GM12878 (cell line): ENCODE measurements at regions of chr4 and their contacts with region 1.

Region 1: DNA sequence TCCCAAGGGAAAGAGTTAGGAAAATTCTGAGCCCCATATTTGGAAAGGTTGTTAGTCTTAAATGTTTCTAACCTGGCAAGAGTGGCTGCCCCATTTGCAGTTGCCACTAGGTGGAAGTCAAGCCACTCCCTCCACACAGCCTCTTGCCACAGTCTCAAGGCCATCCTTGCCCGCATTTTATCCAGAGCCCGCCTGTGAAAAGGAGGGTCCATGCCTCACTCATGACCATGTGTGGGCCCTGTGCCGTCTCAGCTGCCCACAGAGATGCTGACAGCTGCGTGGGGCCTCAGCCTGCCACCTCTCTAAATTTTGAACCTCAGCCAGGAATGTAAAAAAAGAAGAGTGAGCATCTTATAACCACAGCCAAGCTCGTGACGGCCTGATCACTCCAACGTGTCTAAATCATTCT is 201.5 kb upstream of the FAM241A start:
- DNase-seq: no peak
- ATAC-seq: peak; percentile 99
- H3K4me3 ChIP-seq: no peak overlapping the region
- H3K27ac ChIP-seq: no peak overlapping the region
- H3K4me1 ChIP-seq: no peaks in the 10 kb centered on the region
- H3K27me3 ChIP-seq: no peaks in the 10 kb centered on the region; a peak in 1 of 4 replicates
- CTCF ChIP-seq: peak; percentile 60 to 83 (median 70)
- EP300 ChIP-seq: no peak
- POLR2A ChIP-seq: no peak
- RAD21 ChIP-seq: peak; percentile 48

Region 2: GRCh38 chr4:111930659-111931058 is 13.1 kb before region 1 on chr4:
- CTCF ChIA-PET with region 1: interaction called, 11 read pairs
- POLR2A ChIA-PET with region 1: no interaction called
- RAD21 ChIA-PET with region 1: interaction called, 20 read pairs
- SMC1A ChIA-PET with region 1: interaction called, 10 read pairs
- in situ Hi-C with region 1: no loop called
- intact Hi-C with region 1: no loop called
- DNase-seq: peak; percentile 41
- ATAC-seq: peak; percentile 99
- H3K4me3 ChIP-seq: no peak overlapping the region
- H3K27ac ChIP-seq: no peak overlapping the region
- H3K4me1 ChIP-seq: peaks cover 2% of the 10 kb centered on the region; the same call in 1 of the 2 replicates
- H3K27me3 ChIP-seq: no peaks in the 10 kb centered on the region
- CTCF ChIP-seq: no peak
- EP300 ChIP-seq: peak; percentile 20 to 82; a peak in 2 of 4 replicates
- POLR2A ChIP-seq: no peak
- RAD21 ChIP-seq: no peak

Region 3: DNA sequence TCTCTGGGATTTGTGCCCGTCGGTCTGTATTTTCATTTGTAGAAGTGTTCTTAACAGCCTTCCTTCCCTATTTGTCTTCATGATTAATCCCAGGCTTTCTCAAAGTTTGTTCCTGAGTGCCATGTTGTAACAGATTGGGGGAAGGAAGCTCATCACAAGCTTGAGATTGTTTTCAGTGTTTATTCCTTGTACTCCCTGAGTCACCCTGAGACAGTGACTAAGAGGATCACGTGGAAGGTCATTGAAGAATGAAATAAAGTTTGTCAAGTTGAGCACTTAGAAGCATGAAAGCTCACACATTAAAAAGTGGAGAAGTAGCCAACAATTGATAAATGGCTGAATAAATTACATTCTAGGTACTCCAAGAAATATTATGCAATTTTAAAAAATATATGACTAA is 48.0 kb after region 1 on chr4:
- CTCF ChIA-PET with region 1: interaction called, 29 read pairs
- POLR2A ChIA-PET with region 1: no interaction called
- RAD21 ChIA-PET with region 1: interaction called, 16 read pairs
- SMC1A ChIA-PET with region 1: interaction called, 40 read pairs
- in situ Hi-C with region 1: no loop called
- intact Hi-C with region 1: no loop called
- DNase-seq: peak; percentile 13
- ATAC-seq: peak; percentile 69
- H3K4me3 ChIP-seq: no peak overlapping the region
- H3K27ac ChIP-seq: no peak overlapping the region
- H3K4me1 ChIP-seq: peaks cover 12% of the 10 kb centered on the region
- H3K27me3 ChIP-seq: peaks cover 0 to 2% of the 10 kb centered on the region in 2 experiments; a peak in 1 of 4 replicates
- CTCF ChIP-seq: no peak
- EP300 ChIP-seq: no peak
- POLR2A ChIP-seq: no peak
- RAD21 ChIP-seq: no peak

Region 4: DNA sequence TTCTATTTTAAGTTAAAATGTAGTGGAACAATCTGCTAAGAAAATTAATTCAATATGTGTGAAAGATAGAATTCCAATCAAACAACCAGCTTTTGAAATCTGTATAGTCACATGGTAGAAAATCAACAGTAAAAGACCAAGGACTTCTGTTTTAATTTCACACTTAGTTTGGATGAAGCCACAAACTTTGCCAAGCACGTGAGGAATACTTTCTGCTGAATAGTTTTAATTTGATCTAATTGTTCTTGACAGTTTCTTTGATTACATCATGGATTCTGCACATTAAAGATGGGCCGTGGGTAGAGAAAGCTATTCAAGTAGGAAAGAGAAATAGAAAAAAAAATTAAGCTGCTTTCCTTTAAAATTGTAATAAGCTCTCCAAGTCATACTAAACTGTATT is 63.6 kb after region 1 on chr4:
- CTCF ChIA-PET with region 1: interaction called, 25 read pairs
- POLR2A ChIA-PET with region 1: no interaction called
- RAD21 ChIA-PET with region 1: interaction called, 7 read pairs
- SMC1A ChIA-PET with region 1: interaction called, 9 read pairs
- in situ Hi-C with region 1: no loop called
- intact Hi-C with region 1: no loop called
- DNase-seq: no peak
- ATAC-seq: no peak
- H3K4me3 ChIP-seq: no peak overlapping the region
- H3K27ac ChIP-seq: no peak overlapping the region
- H3K4me1 ChIP-seq: no peaks in the 10 kb centered on the region
- H3K27me3 ChIP-seq: no peaks in the 10 kb centered on the region
- CTCF ChIP-seq: no peak
- EP300 ChIP-seq: no peak
- POLR2A ChIP-seq: no peak
- RAD21 ChIP-seq: no peak

Region 5: GRCh38 chr4:112023402-112023801 is 79.6 kb after region 1 on chr4:
- CTCF ChIA-PET with region 1: interaction called, 392 read pairs
- POLR2A ChIA-PET with region 1: no interaction called
- RAD21 ChIA-PET with region 1: interaction called, 214 read pairs
- SMC1A ChIA-PET with region 1: interaction called, 289 read pairs
- in situ Hi-C with region 1: no loop called
- intact Hi-C with region 1: no loop called
- DNase-seq: no peak
- ATAC-seq: no peak
- H3K4me3 ChIP-seq: no peak overlapping the region
- H3K27ac ChIP-seq: no peak overlapping the region
- H3K4me1 ChIP-seq: no peaks in the 10 kb centered on the region
- H3K27me3 ChIP-seq: no peaks in the 10 kb centered on the region
- CTCF ChIP-seq: no peak
- EP300 ChIP-seq: no peak
- POLR2A ChIP-seq: no peak
- RAD21 ChIP-seq: no peak

Region 6: GRCh38 chr4:112038861-112039260 is 95.1 kb after region 1 on chr4:
- CTCF ChIA-PET with region 1: interaction called, 392 read pairs
- POLR2A ChIA-PET with region 1: no interaction called
- RAD21 ChIA-PET with region 1: interaction called, 4 read pairs
- SMC1A ChIA-PET with region 1: interaction called, 289 read pairs
- in situ Hi-C with region 1: loop called (anchors 5 kb)
- intact Hi-C with region 1: no loop called
- DNase-seq: no peak
- ATAC-seq: no peak
- H3K4me3 ChIP-seq: no peak overlapping the region
- H3K27ac ChIP-seq: no peak overlapping the region
- H3K4me1 ChIP-seq: no peaks in the 10 kb centered on the region
- H3K27me3 ChIP-seq: no peaks in the 10 kb centered on the region; a peak in 1 of 4 replicates
- CTCF ChIP-seq: no peak
- EP300 ChIP-seq: no peak
- POLR2A ChIP-seq: no peak
- RAD21 ChIP-seq: no peak

Region 7: DNA sequence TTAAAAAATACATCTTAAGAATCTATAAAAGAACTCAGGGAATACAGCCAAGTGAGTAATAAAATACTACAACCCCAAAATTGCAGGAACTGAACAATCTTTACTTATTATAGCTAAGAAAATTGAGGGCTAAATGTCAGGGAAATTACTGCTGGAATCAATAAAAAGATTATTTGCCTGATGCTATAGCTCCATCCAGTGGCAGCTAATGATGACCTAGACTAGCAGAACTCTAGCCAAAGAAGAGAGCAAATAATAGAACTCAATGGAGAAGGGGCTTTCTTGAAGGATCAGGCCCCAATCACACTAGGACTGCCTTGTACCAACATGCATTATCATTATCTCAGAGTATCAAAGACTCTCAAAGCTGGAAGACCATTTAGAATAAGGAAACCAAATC is 116.4 kb after region 1 on chr4:
- CTCF ChIA-PET with region 1: interaction called, 37 read pairs
- POLR2A ChIA-PET with region 1: no interaction called
- RAD21 ChIA-PET with region 1: interaction called, 25 read pairs
- SMC1A ChIA-PET with region 1: interaction called, 23 read pairs
- in situ Hi-C with region 1: no loop called
- intact Hi-C with region 1: loop called (anchors 1 kb)
- DNase-seq: no peak
- ATAC-seq: peak; percentile 77
- H3K4me3 ChIP-seq: no peak overlapping the region
- H3K27ac ChIP-seq: no peak overlapping the region
- H3K4me1 ChIP-seq: no peaks in the 10 kb centered on the region
- H3K27me3 ChIP-seq: no peaks in the 10 kb centered on the region
- CTCF ChIP-seq: peak; percentile 49 to 67 (median 54); a peak in 5 of 6 replicates
- EP300 ChIP-seq: no peak
- POLR2A ChIP-seq: no peak
- RAD21 ChIP-seq: peak; percentile 66